Endothelial cell of umbilical vein (primary cell): ENCODE measurements at regions of chr6 and their contacts with region 1.

Region 1: DNA sequence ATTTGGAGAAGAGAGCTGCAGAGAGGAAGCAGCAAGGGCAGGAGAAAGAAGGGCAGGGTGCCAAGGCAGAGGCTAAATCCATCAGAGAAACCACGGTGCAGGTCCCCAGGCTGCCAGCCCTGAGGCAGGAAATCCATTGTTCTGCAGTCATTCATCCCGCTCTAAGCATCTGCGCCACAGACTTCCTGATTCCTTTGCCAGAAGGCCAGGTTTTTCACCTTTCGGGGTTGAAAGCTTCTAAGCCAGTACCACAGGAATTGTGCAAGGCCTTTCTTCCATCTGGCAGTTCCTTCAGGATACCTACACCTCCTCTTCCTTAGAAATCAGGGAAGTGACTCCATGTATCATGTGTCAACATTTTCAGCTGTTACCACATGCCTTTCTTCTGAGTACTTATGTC is 45.6 kb downstream of the ADGRF5 start:
- DNase-seq: peak; percentile 97
- H3K4me3 ChIP-seq: no peak overlapping the region
- H3K27ac ChIP-seq: peak overlapping the region; percentile 53
- H3K4me1 ChIP-seq: peaks cover 18% of the 10 kb centered on the region
- H3K27me3 ChIP-seq: no peaks in the 10 kb centered on the region
- CTCF ChIP-seq: no peak
- POLR2A ChIP-seq: no peak

Region 2: DNA sequence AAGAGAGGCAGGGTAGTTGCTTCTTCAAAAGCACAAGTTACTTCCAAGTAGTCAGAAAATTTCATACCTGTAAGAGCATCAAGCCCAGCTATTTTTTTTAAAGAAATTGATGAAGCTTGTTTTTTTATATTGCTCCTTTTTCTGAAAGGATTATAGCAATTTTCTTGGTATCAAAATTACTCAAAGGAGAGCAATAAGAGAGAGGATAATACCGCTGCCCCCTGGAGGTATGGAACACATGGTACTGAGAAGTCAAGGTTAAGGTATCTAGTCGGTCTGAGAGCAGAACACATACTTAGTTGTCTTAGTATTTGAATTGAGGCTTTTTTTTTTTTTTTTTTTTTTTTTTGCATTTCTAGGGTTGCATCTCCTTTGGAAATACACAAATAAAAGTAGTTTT is 13.7 kb before region 1 on chr6:
- CTCF ChIA-PET with region 1: interaction called, 14 read pairs
- POLR2A ChIA-PET with region 1: no interaction called
- dilution Hi-C with region 1: no loop called
- intact Hi-C with region 1: loop called (anchors 1 kb)
- DNase-seq: no peak
- H3K4me3 ChIP-seq: no peak overlapping the region
- H3K27ac ChIP-seq: no peak overlapping the region
- H3K4me1 ChIP-seq: peaks cover 2% of the 10 kb centered on the region
- H3K27me3 ChIP-seq: no peaks in the 10 kb centered on the region
- CTCF ChIP-seq: no peak
- POLR2A ChIP-seq: no peak

Region 3: GRCh38 chr6:46903175-46903574 is 27.0 kb after region 1 on chr6:
- CTCF ChIA-PET with region 1: no interaction called
- POLR2A ChIA-PET with region 1: no interaction called
- dilution Hi-C with region 1: no loop called
- intact Hi-C with region 1: loop called (anchors 1 kb)
- DNase-seq: no peak
- H3K4me3 ChIP-seq: no peak overlapping the region
- H3K27ac ChIP-seq: peak overlapping the region; percentile 2
- H3K4me1 ChIP-seq: peaks cover 35% of the 10 kb centered on the region
- H3K27me3 ChIP-seq: no peaks in the 10 kb centered on the region
- CTCF ChIP-seq: no peak
- POLR2A ChIP-seq: no peak

Region 4: GRCh38 chr6:46909371-46909770 is 33.2 kb after region 1 on chr6:
- CTCF ChIA-PET with region 1: no interaction called
- POLR2A ChIA-PET with region 1: no interaction called
- dilution Hi-C with region 1: no loop called
- intact Hi-C with region 1: loop called (anchors 2 kb)
- DNase-seq: peak; percentile 93
- H3K4me3 ChIP-seq: no peak overlapping the region
- H3K27ac ChIP-seq: peak overlapping the region; percentile 88
- H3K4me1 ChIP-seq: peaks cover 32% of the 10 kb centered on the region
- H3K27me3 ChIP-seq: no peaks in the 10 kb centered on the region
- CTCF ChIP-seq: peak in 1 of 2 donors; percentile 3
- POLR2A ChIP-seq: no peak

Region 5: DNA sequence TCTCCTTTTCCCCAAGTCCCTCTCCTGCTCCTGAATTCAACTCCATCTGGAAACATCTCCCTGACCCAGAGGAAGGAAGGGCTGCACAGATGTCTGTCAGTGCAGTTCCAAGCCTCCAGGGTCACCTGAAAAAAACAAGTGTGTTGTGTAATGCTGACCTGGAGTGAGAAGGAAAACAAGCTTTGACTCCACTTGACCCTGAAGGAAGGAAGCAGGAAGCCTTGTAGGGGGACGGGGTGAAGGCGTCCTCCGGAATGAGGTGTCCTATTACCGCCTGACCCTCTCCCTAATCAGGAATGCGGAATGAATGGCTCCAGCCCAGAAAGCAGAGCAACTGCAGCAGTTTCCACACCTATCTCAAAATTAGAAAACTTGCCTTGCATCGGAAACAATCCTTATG is 59.5 kb after region 1 on chr6:
- CTCF ChIA-PET with region 1: interaction called, 4 read pairs
- POLR2A ChIA-PET with region 1: no interaction called
- dilution Hi-C with region 1: no loop called
- intact Hi-C with region 1: loop called (anchors 1 kb)
- DNase-seq: peak; percentile 85
- H3K4me3 ChIP-seq: no peak overlapping the region
- H3K27ac ChIP-seq: peak overlapping the region; percentile 3
- H3K4me1 ChIP-seq: peaks cover 17% of the 10 kb centered on the region
- H3K27me3 ChIP-seq: peaks cover 0 to 4% of the 10 kb centered on the region in 2 experiments
- CTCF ChIP-seq: no peak
- POLR2A ChIP-seq: peak; percentile 47

Region 6: GRCh38 chr6:47264775-47265184 is 388.7 kb after region 1 on chr6:
- CTCF ChIA-PET with region 1: no interaction called
- POLR2A ChIA-PET with region 1: no interaction called
- dilution Hi-C with region 1: no loop called
- intact Hi-C with region 1: loop called (anchors 1 kb)
- DNase-seq: peak; percentile 97
- H3K4me3 ChIP-seq: no peak overlapping the region
- H3K27ac ChIP-seq: peak overlapping the region; percentile 76
- H3K4me1 ChIP-seq: peaks cover 63% of the 10 kb centered on the region
- H3K27me3 ChIP-seq: no peaks in the 10 kb centered on the region
- CTCF ChIP-seq: no peak
- POLR2A ChIP-seq: no peak

Region 7: DNA sequence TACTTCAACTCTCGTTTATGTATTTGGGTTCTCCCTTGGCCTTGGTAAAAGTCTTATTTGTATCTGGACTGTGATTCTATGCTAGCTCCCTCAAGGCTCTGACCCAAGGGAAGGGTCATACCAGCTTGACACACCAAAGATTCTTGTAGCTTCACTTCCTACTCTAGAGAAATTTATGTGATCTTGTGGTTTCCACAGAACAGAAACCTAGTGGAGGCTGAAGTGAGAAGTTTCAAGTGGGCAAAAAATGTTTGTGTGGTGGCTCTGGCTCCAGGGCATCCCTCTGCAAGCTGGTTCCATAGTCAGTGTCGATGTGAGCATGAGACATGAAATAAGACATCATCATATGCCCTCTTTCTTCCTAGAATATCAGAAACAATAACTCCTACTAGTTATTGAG is 481.7 kb after region 1 on chr6:
- CTCF ChIA-PET with region 1: no interaction called
- POLR2A ChIA-PET with region 1: no interaction called
- dilution Hi-C with region 1: no loop called
- intact Hi-C with region 1: no loop called
- DNase-seq: no peak
- H3K4me3 ChIP-seq: no peak overlapping the region
- H3K27ac ChIP-seq: no peak overlapping the region
- H3K4me1 ChIP-seq: no peaks in the 10 kb centered on the region
- H3K27me3 ChIP-seq: peaks cover 0 to 3% of the 10 kb centered on the region in 2 experiments
- CTCF ChIP-seq: no peak
- POLR2A ChIP-seq: no peak